ENCODE measurements at regions of chr14 and their contacts with region 1.

Region 1: GRCh38 chr14:21467616-21468015 is 9.1 kb downstream of the RAB2B start:
- DNase-seq: peak; percentile 98
- ATAC-seq: peak; percentile 93
- H3K4me3 ChIP-seq: no peak overlapping the region
- H3K27ac ChIP-seq: no peak overlapping the region; the same call in 1 of the 2 replicates
- H3K4me1 ChIP-seq: peaks cover 6% of the 10 kb centered on the region; the same call in 1 of the 2 replicates
- H3K27me3 ChIP-seq: no peaks in the 10 kb centered on the region
- CTCF ChIP-seq: no peak
- POLR2A ChIP-seq: no peak
- RAD21 ChIP-seq: no peak

Region 2: DNA sequence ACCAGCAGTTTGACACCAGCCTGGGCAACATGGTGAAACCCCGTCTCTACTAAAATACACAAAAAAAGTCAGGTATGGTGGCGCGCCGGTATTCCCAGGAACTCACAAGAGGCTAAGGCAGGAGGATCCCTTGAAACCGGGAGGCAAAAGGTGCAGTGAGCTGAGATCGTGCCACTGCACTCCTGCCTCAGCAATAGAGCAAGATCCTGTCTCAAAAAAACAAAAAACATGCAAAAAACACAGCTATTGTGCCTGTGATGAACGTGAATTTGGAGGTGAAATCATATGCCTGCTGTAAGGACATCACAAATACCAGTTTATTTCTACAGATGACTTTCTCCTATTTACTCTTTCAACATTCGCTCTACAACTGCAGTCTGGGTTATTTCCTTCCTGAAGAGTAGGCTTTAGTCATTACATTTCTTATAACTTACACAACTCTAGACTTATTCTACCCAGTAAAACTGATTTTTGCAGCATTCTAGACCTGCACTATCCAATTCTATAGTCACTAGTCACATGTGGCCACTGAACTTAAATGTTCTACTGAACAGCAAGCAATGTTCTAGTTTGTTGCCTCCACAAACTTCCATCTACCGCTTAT is 246.6 kb before region 1 on chr14:
- CTCF ChIA-PET with region 1: no interaction called
- POLR2A ChIA-PET with region 1: interaction called, 19 read pairs
- dilution Hi-C with region 1: no loop called
- in situ Hi-C with region 1: no loop called
- intact Hi-C with region 1: no loop called
- DNase-seq: peak; percentile 16
- ATAC-seq: no peak; the same call in 1 of the 2 replicates
- H3K4me3 ChIP-seq: no peak overlapping the region
- H3K27ac ChIP-seq: no peak overlapping the region
- H3K4me1 ChIP-seq: peaks cover 16% of the 10 kb centered on the region
- H3K27me3 ChIP-seq: no peaks in the 10 kb centered on the region
- CTCF ChIP-seq: no peak
- POLR2A ChIP-seq: no peak
- RAD21 ChIP-seq: no peak

Region 3: DNA sequence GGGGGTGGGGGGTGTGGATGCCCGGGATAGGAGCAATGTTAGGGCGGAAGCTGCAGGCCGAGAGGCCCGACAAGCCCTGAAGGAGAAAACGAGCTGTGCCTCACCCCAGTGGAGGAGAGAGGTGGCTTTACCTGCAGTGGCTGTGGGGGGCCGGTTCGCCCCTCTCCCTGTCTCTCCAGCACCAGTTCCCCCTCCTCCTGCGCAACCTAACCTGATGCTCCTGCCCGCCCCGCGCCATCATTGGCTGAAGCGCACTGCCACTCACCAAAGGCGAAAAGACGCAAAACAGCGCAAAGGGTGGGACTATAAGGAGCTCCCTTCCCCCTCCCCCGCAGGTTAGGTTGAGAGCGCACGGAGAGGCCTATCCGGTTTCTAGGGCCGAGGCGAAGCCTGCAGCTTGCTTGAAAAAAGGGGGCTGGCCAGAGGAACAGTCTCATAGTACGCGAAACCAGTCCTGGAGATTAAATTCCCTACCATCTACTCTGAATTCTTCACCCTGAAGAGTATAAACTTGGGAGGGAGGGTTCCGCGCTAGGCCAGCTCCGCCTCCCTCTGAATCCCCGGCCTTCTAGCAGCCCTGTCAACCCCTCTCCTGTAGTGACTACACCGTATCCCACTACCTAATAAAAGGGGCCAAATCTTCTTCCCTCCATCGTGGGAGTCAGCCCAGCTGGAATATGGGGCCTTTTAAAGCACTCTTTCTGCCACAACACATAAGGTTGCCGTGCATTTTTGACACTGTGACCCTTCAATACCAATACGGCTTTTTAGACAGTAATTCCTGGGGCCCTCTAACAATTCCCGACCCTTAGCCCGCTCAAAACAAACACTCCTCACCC is 30.3 kb before region 1 on chr14:
- CTCF ChIA-PET with region 1: no interaction called
- POLR2A ChIA-PET with region 1: no interaction called
- dilution Hi-C with region 1: no loop called
- in situ Hi-C with region 1: no loop called
- intact Hi-C with region 1: loop called (anchors 1 kb)
- DNase-seq: peak; percentile 99
- ATAC-seq: peak; percentile 100
- H3K4me3 ChIP-seq: peak overlapping the region; percentile 90
- H3K27ac ChIP-seq: peak overlapping the region; percentile 90
- H3K4me1 ChIP-seq: peaks cover 5% of the 10 kb centered on the region
- H3K27me3 ChIP-seq: no peaks in the 10 kb centered on the region
- CTCF ChIP-seq: no peak
- POLR2A ChIP-seq: no peak
- RAD21 ChIP-seq: no peak